Caco-2 (cell line): ENCODE measurements at regions of chr16 and their contacts with region 1.

Region 1: DNA sequence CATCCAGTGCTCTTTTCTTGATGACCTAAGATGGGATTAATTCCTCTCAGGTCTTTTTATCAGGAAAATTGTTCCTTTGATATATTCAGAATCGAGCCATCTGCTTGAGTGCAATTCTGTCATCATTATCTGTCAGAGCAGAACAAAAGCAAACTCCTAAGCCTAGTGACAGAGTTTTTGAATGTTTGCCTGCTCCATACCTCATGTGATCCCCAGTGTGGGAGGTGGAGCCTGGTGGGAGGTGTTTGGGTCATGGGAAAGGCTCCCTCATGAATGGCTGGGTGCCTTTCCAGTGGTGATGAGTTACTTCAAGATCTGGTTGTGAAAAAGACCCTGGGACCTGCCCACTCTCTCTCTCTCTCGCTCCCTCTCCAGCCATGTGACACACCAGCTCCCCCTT is 628.2 kb downstream of the CDH11 start:
- DNase-seq: peak; percentile 28 to 46
- H3K4me3 ChIP-seq: no peak overlapping the region
- H3K4me3 Mint-ChIP-seq: no peak overlapping the region
- H3K27ac Mint-ChIP-seq: no peak overlapping the region
- H3K4me1 ChIP-seq: peaks cover 25% of the 10 kb centered on the region
- H3K4me1 Mint-ChIP-seq: peaks cover 28% of the 10 kb centered on the region
- H3K27me3 ChIP-seq: no peaks in the 10 kb centered on the region
- H3K27me3 Mint-ChIP-seq: no peaks in the 10 kb centered on the region
- CTCF ChIP-seq: no peak

Region 2: GRCh38 chr16:64416216-64417005 is 77.3 kb before region 1 on chr16:
- CTCF ChIA-PET with region 1: no interaction called
- POLR2A ChIA-PET with region 1: no interaction called
- intact Hi-C with region 1: no loop called
- DNase-seq: no peak
- H3K4me3 ChIP-seq: no peak overlapping the region
- H3K4me3 Mint-ChIP-seq: no peak overlapping the region
- H3K27ac Mint-ChIP-seq: no peak overlapping the region
- H3K4me1 ChIP-seq: no peaks in the 10 kb centered on the region
- H3K4me1 Mint-ChIP-seq: no peaks in the 10 kb centered on the region
- H3K27me3 ChIP-seq: no peaks in the 10 kb centered on the region
- H3K27me3 Mint-ChIP-seq: peaks cover 7% of the 10 kb centered on the region
- CTCF ChIP-seq: no peak

Region 3: GRCh38 chr16:64478252-64478906 is 15.3 kb before region 1 on chr16:
- CTCF ChIA-PET with region 1: no interaction called
- POLR2A ChIA-PET with region 1: no interaction called
- intact Hi-C with region 1: loop called (anchors 1 kb)
- DNase-seq: peak; percentile 73 to 76
- H3K4me3 ChIP-seq: no peak overlapping the region
- H3K4me3 Mint-ChIP-seq: peak overlapping the region; percentile 15
- H3K27ac Mint-ChIP-seq: peak overlapping the region; percentile 12
- H3K4me1 ChIP-seq: peaks cover 32% of the 10 kb centered on the region
- H3K4me1 Mint-ChIP-seq: peaks cover 35% of the 10 kb centered on the region
- H3K27me3 ChIP-seq: no peaks in the 10 kb centered on the region
- H3K27me3 Mint-ChIP-seq: no peaks in the 10 kb centered on the region
- CTCF ChIP-seq: no peak